GM18951 (cell line): ENCODE measurements at regions of chr4 and their contacts with region 1.

Region 1: DNA sequence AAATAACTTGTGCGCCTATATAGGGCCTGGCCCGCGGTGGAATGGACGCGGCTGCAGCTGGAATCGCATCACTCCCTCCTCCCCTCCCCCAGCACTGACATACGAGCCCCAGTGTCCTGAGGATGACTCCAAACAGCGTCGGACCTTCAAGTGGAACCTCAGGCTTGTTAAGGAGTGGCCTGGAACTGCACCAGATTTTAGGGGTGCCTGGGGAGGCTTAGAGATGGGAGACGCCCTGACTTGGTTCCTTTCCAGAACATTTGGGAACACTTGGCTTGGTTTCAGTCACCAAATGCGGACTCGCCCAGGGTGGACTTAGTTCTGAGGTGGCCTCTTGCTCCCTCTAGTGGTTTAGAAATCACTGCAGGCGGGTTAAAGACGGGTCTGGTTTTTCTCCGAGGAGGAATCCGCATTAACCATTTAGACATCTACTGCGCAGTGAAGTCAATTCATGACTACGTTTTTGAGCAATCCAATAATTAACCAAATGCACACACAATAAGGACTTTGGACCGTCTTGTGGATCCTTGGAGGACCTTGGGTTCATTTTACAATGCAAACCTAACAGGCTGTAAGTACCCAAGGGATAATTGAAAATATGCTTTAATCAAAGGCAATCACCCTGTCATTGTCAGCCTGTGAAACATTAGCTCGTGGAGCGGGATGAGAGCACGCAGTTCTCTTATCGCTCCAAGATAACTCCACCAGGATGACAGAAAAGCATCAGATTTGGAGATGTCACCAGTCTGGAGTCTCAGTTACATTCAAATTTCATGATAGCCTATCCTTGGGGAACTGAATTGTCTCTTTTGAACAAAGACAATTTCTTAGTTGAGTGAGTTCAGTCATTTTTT is 11.2 kb upstream of the PDGFRA start:
- POLR2A ChIP-seq: no peak

Region 2: GRCh38 chr4:53196882-53197771 is 1020.7 kb before region 1 on chr4:
- in situ Hi-C with region 1: loop called (anchors 25 kb)
- POLR2A ChIP-seq: no peak

Region 3: GRCh38 chr4:53702334-53703266 is 515.3 kb before region 1 on chr4:
- in situ Hi-C with region 1: loop called (anchors 25 kb)
- POLR2A ChIP-seq: peak; percentile 49